Gastrocnemius medialis (tissue), 4 donors: ENCODE measurements at regions of chr7 and their contacts with region 1.

Region 1: DNA sequence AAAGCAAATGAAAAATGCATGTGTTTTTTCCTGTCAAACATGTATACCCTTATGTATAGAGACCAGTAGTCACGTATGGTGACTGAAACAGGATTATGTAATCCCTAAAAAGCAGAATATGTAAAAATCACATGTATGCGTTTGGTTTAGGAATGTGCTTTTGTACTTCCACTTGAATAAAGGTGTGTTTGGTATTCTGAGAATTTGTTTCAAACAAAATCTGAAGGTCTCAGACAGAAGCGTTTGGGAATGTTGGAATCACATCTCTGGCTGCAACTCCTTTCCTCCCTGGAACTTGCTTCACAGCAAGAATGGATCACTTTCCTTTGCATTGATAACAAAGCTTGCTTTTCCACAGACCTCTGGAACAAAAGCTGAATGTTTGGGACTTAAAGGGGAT is 17.8 kb downstream of the ZNF655 start:
- DNase-seq: no peak
- ATAC-seq: no peak
- H3K4me3 ChIP-seq: no peak overlapping the region
- H3K27ac ChIP-seq: peak overlapping the region; percentile 72 to 81 (median 78)
- H3K4me1 ChIP-seq: peaks cover 26 to 27% of the 10 kb centered on the region in 2 donors
- H3K27me3 ChIP-seq: no peaks in the 10 kb centered on the region
- CTCF ChIP-seq: no peak
- POLR2A ChIP-seq: no peak

Region 2: DNA sequence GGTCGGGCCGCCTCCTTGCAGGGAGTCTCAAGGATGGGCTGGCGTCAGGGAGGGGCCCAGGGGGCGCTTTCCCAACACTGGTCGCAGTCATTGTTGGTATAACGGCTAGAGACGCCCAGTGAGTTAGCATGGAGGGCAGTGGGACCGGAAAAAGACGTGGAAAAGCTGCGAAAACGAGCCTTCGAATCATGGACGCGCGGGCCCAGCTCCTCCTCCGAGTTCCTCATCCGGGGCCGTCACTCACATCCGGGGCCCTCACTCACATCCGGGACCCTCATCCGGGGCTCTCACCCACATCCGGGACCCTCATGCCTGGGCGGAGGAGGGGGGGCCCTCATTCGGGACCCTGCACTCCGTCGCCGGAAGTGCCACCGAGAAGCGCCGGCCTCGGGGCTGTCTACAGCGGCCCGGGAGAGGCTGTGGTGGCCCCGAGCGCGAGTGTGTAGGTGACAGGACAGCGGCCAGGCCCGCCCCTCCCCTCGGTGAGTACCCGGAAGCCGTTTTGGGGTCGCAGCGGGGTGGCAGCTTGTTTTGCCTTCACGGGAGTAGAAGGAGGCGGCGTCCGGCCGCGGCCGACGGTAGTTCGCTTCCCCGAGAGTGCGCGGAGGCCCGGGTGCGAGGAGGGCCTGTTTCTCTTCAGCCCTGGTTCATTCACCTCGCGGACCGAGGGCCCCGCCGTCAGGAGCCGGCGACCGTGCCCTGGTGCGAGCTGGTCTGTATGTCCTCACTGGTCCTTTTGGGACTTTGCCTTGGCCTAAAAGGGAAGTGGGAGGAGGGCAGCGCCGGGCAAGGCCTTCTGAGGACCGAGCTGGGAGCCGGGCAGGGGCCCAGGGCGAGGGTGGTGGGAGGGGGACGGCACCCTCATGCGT is 17.7 kb before region 1 on chr7 and contains the start of gene ZNF655:
- in situ Hi-C with region 1: no loop called
- intact Hi-C with region 1: loop called (anchors 1 kb)
- DNase-seq: peak; percentile 91 to 92
- ATAC-seq: peak; percentile 86 to 92
- H3K4me3 ChIP-seq: peak within 1 kb of the TSS; percentile 82 to 94 (median 90)
- H3K27ac ChIP-seq: peak within 1 kb of the TSS; percentile 96 to 99 (median 98)
- H3K4me1 ChIP-seq: peaks cover 19 to 31% of the 10 kb centered on the region in 2 donors
- H3K27me3 ChIP-seq: no peaks in the 10 kb centered on the region
- CTCF ChIP-seq: no peak
- POLR2A ChIP-seq: peak; percentile 91 to 93
- total RNA-seq, gene ZNF655: 41.5 to 85.1 (median 56.5) TPM

Region 3: GRCh38 chr7:99693100-99693426 is 116.8 kb after region 1 on chr7:
- in situ Hi-C with region 1: no loop called
- intact Hi-C with region 1: no loop called
- DNase-seq: no peak
- ATAC-seq: no peak
- H3K4me3 ChIP-seq: no peak overlapping the region
- H3K27ac ChIP-seq: no peak overlapping the region
- H3K4me1 ChIP-seq: no peaks in the 10 kb centered on the region
- H3K27me3 ChIP-seq: no peaks in the 10 kb centered on the region
- CTCF ChIP-seq: no peak
- POLR2A ChIP-seq: no peak

Region 4: GRCh38 chr7:99707096-99707495 is 130.8 kb after region 1 on chr7:
- in situ Hi-C with region 1: no loop called
- intact Hi-C with region 1: no loop called
- DNase-seq: no peak
- ATAC-seq: no peak
- H3K4me3 ChIP-seq: no peak overlapping the region
- H3K27ac ChIP-seq: no peak overlapping the region
- H3K4me1 ChIP-seq: no peaks in the 10 kb centered on the region
- H3K27me3 ChIP-seq: no peaks in the 10 kb centered on the region
- CTCF ChIP-seq: no peak
- POLR2A ChIP-seq: no peak

Region 5: GRCh38 chr7:100247152-100247757 is 671.0 kb after region 1 on chr7:
- in situ Hi-C with region 1: no loop called
- intact Hi-C with region 1: no loop called
- DNase-seq: peak; percentile 91 to 95
- ATAC-seq: peak; percentile 55 to 56
- H3K4me3 ChIP-seq: no peak overlapping the region
- H3K27ac ChIP-seq: peak overlapping the region; percentile 98 to 100 (median 98)
- H3K4me1 ChIP-seq: peaks cover 61 to 67% of the 10 kb centered on the region in 2 donors
- H3K27me3 ChIP-seq: no peaks in the 10 kb centered on the region
- CTCF ChIP-seq: peak in 4 of 5 experiments; percentile 10 to 71 (median 28)
- POLR2A ChIP-seq: peak; percentile 30 to 68